ENCODE measurements at regions of chrX and their contacts with region 1.

Region 1: GRCh38 chrX:80578517-80579105 is 158.4 kb downstream of the TENT5D start:
- DNase-seq: peak; percentile 27
- H3K4me3 ChIP-seq: no peak overlapping the region
- H3K27ac ChIP-seq: no peak overlapping the region
- H3K4me1 ChIP-seq: no peaks in the 10 kb centered on the region
- H3K27me3 ChIP-seq: no peaks in the 10 kb centered on the region

Region 2: GRCh38 chrX:80285131-80285773 is 293.4 kb before region 1 on chrX:
- in situ Hi-C with region 1: loop called (anchors 25 kb)
- DNase-seq: peak; percentile 26
- H3K4me3 ChIP-seq: no peak overlapping the region
- H3K27ac ChIP-seq: no peak overlapping the region
- H3K4me1 ChIP-seq: no peaks in the 10 kb centered on the region
- H3K27me3 ChIP-seq: no peaks in the 10 kb centered on the region

Region 3: DNA sequence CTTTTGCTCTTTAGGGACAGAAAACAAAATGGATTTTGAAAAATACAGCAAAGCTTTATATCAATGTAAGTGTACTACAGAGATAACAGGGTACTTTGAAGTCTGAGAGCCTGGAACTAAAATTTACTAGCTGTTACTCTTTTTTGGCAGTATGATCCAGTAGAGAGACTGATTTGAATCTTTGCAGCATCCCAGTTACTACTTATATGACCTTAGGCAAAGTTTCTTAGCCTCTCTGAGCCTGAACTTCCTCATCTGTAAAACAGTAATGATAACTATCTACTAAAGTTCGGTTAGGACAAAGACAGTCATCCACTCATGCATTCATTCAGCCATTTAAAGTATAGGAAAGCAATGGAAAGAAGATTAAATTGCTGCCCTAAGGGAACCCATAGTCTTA is 221.0 kb after region 1 on chrX:
- in situ Hi-C with region 1: no loop called
- DNase-seq: no peak
- H3K4me3 ChIP-seq: no peak overlapping the region
- H3K27ac ChIP-seq: no peak overlapping the region
- H3K4me1 ChIP-seq: no peaks in the 10 kb centered on the region
- H3K27me3 ChIP-seq: no peaks in the 10 kb centered on the region